Ascending aorta (tissue), 2 donors: ENCODE measurements at regions of chr10 and their contacts with region 1.

Region 1: DNA sequence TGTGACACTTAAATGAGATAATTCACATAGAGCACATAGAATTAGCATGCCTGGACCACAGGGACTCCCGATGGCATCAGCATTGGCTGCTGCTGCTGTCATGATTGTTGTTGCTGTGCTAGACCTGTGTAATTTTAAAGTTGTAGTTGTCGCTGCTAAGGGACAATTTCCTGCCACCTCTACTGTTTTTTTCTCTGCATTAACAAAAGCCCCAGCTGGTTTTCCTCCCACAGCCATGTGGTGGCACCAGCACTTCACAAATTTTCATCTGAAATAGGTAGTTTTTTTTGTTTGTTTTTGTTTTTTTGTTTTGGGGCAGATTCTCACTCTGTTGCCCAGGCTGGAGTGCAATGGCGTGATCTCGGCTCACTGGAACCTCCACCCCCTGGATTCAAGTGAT is 25.4 kb upstream of the PRXL2A start:
- DNase-seq: no peak
- H3K4me3 ChIP-seq: no peak overlapping the region
- H3K27ac ChIP-seq: no peak overlapping the region
- H3K4me1 ChIP-seq: peaks cover 4 to 23% of the 10 kb centered on the region in 2 donors
- H3K27me3 ChIP-seq: no peaks in the 10 kb centered on the region
- CTCF ChIP-seq: peak; percentile 40 to 72 (median 55)

Region 2: GRCh38 chr10:80344276-80344675 is 38.7 kb before region 1 on chr10:
- intact Hi-C with region 1: no loop called
- DNase-seq: no peak
- H3K4me3 ChIP-seq: no peak overlapping the region
- H3K27ac ChIP-seq: no peak overlapping the region
- H3K4me1 ChIP-seq: no peaks in the 10 kb centered on the region
- H3K27me3 ChIP-seq: no peaks in the 10 kb centered on the region
- CTCF ChIP-seq: no peak

Region 3: DNA sequence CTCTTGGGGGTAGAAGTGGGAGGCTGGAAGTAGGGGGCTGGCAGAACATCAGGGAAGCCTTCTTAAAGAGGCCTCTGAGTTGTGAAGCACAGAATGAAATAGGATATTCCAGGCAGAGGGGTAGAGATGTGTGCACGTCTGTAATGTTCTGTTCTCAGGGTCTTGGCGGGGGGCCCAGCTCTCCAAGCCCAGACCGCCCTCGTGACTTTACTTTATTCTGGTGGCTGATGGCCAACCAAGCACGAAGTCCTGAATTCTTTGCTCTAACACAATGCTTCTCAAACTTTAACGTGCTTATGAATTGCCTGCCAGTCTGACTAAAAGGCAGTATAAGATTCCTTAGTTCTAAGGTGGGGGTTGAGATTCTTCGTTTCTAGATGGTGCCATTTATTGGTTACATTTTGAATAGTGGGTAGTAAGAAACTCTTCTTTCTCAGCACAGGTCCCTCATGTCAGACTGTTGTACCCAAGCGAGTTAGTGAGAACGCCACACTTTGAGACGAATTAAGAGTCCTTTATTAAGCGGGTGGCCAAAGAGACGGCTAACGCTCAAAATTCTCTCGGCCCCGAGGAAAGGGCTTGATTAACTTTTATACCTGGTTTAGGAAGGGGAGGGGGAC is 33.6 kb after region 1 on chr10:
- intact Hi-C with region 1: no loop called
- DNase-seq: peak in 1 of 2 donors; percentile 65
- H3K4me3 ChIP-seq: no peak overlapping the region
- H3K27ac ChIP-seq: no peak overlapping the region
- H3K4me1 ChIP-seq: peaks cover 0 to 8% of the 10 kb centered on the region in 2 donors
- H3K27me3 ChIP-seq: no peaks in the 10 kb centered on the region
- CTCF ChIP-seq: no peak

Region 4: GRCh38 chr10:80444646-80445319 is 61.8 kb after region 1 on chr10:
- intact Hi-C with region 1: loop called (anchors 5 kb)
- DNase-seq: no peak
- H3K4me3 ChIP-seq: no peak overlapping the region
- H3K27ac ChIP-seq: no peak overlapping the region
- H3K4me1 ChIP-seq: no peaks in the 10 kb centered on the region
- H3K27me3 ChIP-seq: no peaks in the 10 kb centered on the region
- CTCF ChIP-seq: peak; percentile 19 to 68 (median 64)

Region 5: GRCh38 chr10:80504158-80504811 is 121.3 kb after region 1 on chr10:
- intact Hi-C with region 1: loop called (anchors 1 kb)
- DNase-seq: no peak
- H3K4me3 ChIP-seq: no peak overlapping the region
- H3K27ac ChIP-seq: peak overlapping the region; percentile 48 to 76
- H3K4me1 ChIP-seq: peaks cover 0 to 26% of the 10 kb centered on the region in 2 donors
- H3K27me3 ChIP-seq: no peaks in the 10 kb centered on the region
- CTCF ChIP-seq: no peak

Region 6: DNA sequence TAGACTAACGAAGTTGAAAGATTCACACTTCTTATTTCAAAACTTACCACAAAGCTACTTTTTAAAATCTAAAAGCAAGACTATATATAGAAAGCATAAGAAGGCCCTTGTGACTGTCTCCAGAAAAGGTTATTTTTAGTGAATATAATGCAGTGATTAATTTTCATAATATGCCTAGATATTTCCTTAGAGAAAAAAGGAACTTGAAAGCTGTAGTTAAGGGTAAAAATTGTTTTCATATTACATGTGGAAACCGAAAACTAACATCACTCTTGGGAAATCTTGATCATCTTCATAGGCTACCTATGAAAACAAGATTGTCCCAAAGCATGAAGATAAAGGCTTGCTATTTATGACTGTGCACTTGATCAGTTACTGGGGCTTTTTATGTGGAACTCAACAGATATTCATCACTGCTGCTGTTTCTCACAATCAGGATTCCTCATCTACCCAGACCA is 378.0 kb after region 1 on chr10:
- intact Hi-C with region 1: no loop called
- DNase-seq: no peak
- H3K4me3 ChIP-seq: no peak overlapping the region
- H3K27ac ChIP-seq: no peak overlapping the region
- H3K4me1 ChIP-seq: no peaks in the 10 kb centered on the region
- H3K27me3 ChIP-seq: no peaks in the 10 kb centered on the region
- CTCF ChIP-seq: no peak